PC-9 (cell line): ENCODE measurements at regions of chr12 and their contacts with region 1.

Region 1: DNA sequence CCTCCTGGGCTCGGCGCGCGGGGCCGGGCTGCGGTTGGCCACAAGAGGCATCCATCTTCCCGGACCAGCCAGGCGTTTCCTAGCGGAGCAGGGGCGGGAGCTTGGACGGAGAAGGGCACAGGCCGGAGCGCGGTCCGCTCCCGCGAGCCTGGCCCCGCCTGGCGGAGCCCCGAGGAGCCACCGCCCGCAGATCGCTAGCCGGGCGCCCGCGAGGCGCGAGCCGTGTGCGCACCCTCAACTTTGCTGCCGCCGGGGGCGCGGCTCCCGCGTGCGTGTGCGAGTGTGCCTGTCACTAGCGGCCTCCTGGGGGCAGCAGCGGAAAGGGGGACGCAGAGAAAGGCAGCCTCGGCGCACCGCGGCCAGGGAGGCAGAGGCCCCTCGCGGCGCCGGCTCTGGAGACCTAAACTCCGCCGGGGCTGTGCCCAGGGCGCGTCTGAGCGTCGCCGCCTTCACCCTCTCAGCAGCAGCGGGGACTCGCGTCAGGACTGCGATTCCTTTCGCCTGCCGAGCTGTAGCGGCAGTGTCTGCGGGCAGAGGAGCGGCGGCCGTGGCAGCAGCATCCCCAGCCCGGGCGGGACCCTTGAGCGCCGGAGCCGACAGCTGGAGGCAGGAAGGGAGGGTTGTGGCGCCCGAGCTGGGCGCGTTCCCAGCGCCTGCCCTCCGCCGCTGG is 644 bp upstream of the SRGAP1 start:
- DNase-seq: peak; percentile 78 to 91
- H3K4me3 ChIP-seq: peak overlapping the region; percentile 97
- H3K27ac ChIP-seq: peak overlapping the region; percentile 65; the same call in 1 of the 2 replicates
- H3K4me1 ChIP-seq: peaks cover 29% of the 10 kb centered on the region
- H3K27me3 ChIP-seq: no peaks in the 10 kb centered on the region
- CTCF ChIP-seq: peak; percentile 84

Region 2: DNA sequence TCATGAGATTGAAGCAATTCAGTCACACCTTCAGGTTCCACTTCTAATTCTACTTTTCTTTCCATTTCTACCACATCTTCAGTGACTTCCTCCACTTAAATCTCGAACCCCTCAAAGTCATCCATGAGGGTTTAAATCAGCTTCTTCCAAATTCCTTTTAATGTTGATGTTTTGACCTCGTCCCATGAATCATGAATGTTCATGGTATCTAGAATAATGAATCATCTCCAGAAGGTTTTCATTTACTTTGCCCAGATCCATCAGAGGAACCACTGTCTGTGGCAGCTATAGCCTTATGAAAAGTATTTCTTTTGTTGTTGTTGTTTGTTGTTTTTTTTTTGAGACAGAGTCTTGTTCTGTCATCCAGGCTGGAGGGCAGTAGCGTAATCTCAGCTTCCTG is 56.5 kb before region 1 on chr12:
- CTCF ChIA-PET with region 1: no interaction called
- POLR2A ChIA-PET with region 1: no interaction called
- intact Hi-C with region 1: no loop called
- DNase-seq: no peak
- H3K4me3 ChIP-seq: no peak overlapping the region
- H3K27ac ChIP-seq: no peak overlapping the region
- H3K4me1 ChIP-seq: no peaks in the 10 kb centered on the region
- H3K27me3 ChIP-seq: no peaks in the 10 kb centered on the region
- CTCF ChIP-seq: no peak

Region 3: GRCh38 chr12:63917864-63918799 is 74.3 kb after region 1 on chr12:
- CTCF ChIA-PET with region 1: interaction called, 3 read pairs
- POLR2A ChIA-PET with region 1: interaction called, 4 read pairs
- intact Hi-C with region 1: loop called (anchors 1 kb)
- DNase-seq: peak; percentile 50 to 99
- H3K4me3 ChIP-seq: peak overlapping the region; percentile 20
- H3K27ac ChIP-seq: peak overlapping the region; percentile 97
- H3K4me1 ChIP-seq: peaks cover 92% of the 10 kb centered on the region
- H3K27me3 ChIP-seq: no peaks in the 10 kb centered on the region
- CTCF ChIP-seq: no peak

Region 4: DNA sequence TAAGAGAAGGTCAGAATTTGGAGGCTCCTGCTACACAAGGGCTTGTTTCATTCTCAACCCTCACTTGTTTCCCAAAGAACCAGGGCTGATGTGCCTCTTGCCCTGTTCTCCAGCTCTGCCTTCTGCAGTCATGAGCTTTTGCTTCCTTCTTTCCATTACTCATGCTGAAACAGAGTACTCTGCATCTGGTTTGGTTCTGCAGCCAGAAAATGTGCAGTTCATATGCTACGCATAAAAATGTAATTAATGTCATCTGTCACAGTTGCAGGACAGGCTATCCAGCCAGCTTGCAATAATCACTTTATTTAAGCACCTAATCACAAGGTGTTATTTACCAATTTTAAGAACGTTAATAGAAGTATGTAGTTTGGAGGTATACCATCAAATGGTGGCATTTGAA is 150.8 kb after region 1 on chr12:
- CTCF ChIA-PET with region 1: no interaction called
- POLR2A ChIA-PET with region 1: no interaction called
- intact Hi-C with region 1: loop called (anchors 10 kb)
- DNase-seq: no peak
- H3K4me3 ChIP-seq: no peak overlapping the region
- H3K27ac ChIP-seq: no peak overlapping the region
- H3K4me1 ChIP-seq: no peaks in the 10 kb centered on the region; the same call in 1 of the 2 replicates
- H3K27me3 ChIP-seq: no peaks in the 10 kb centered on the region
- CTCF ChIP-seq: no peak

Region 5: DNA sequence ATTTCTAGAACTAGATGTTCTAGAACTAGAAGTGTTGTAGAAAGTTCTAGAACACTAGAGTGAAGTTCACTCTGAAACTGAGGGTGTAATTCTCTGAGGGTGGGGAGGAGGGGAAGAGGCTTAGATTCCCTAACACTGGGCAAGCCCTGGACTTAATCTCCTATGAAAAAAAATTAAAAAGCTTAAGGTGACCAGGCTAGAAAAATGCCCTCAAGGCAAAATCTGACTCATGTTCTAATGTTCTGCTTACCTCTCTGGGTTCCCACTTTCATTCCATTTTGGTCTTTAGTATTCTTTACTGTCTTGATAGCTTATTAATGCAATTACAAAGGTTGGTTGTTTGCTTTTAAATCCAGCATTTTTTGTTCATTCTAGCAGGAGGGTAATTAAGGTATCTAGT is 276.7 kb after region 1 on chr12:
- CTCF ChIA-PET with region 1: no interaction called
- POLR2A ChIA-PET with region 1: no interaction called
- intact Hi-C with region 1: loop called (anchors 5 kb)
- DNase-seq: peak; percentile 38 to 80
- H3K4me3 ChIP-seq: no peak overlapping the region
- H3K27ac ChIP-seq: peak overlapping the region; percentile 54
- H3K4me1 ChIP-seq: peaks cover 23% of the 10 kb centered on the region
- H3K27me3 ChIP-seq: no peaks in the 10 kb centered on the region
- CTCF ChIP-seq: no peak

Region 6: GRCh38 chr12:64236549-64236948 is 392.7 kb after region 1 on chr12:
- CTCF ChIA-PET with region 1: interaction called, 4 read pairs
- POLR2A ChIA-PET with region 1: no interaction called
- intact Hi-C with region 1: loop called (anchors 5 kb)
- DNase-seq: no peak
- H3K4me3 ChIP-seq: no peak overlapping the region
- H3K27ac ChIP-seq: no peak overlapping the region
- H3K4me1 ChIP-seq: no peaks in the 10 kb centered on the region
- H3K27me3 ChIP-seq: no peaks in the 10 kb centered on the region
- CTCF ChIP-seq: no peak

Region 7: GRCh38 chr12:64696080-64696741 is 852.4 kb after region 1 on chr12:
- CTCF ChIA-PET with region 1: no interaction called
- POLR2A ChIA-PET with region 1: no interaction called
- intact Hi-C with region 1: no loop called
- DNase-seq: peak in 1 of 2 experiments; percentile 37
- H3K4me3 ChIP-seq: no peak overlapping the region
- H3K27ac ChIP-seq: no peak overlapping the region
- H3K4me1 ChIP-seq: peaks cover 12% of the 10 kb centered on the region
- H3K27me3 ChIP-seq: no peaks in the 10 kb centered on the region
- CTCF ChIP-seq: peak; percentile 72